ENCODE measurements at regions of chr20 and their contacts with region 1.

Region 1: GRCh38 chr20:62302341-62303058 is at the start of gene ADRM1:
- DNase-seq: peak; percentile 99 to 100
- H3K4me3 ChIP-seq: peak within 1 kb of the TSS; percentile 98
- H3K4me3 Mint-ChIP-seq: peak within 1 kb of the TSS; percentile 89
- H3K27ac Mint-ChIP-seq: peak within 1 kb of the TSS; percentile 97
- H3K4me1 ChIP-seq: peaks cover 20% of the 10 kb centered on the region
- H3K4me1 Mint-ChIP-seq: peaks cover 30% of the 10 kb centered on the region
- H3K27me3 ChIP-seq: no peaks in the 10 kb centered on the region
- H3K27me3 Mint-ChIP-seq: no peaks in the 10 kb centered on the region
- CTCF ChIP-seq: peak; percentile 100
- total RNA-seq, gene ADRM1: 261 and 263 TPM in 2 replicates

Region 2: GRCh38 chr20:62237801-62238571 is 64.5 kb before region 1 on chr20 and contains the start of gene OSBPL2:
- CTCF ChIA-PET with region 1: interaction called, 7 read pairs
- POLR2A ChIA-PET with region 1: no interaction called
- intact Hi-C with region 1: loop called (anchors 1 kb)
- DNase-seq: peak; percentile 100
- H3K4me3 ChIP-seq: peak within 1 kb of the TSS; percentile 89
- H3K4me3 Mint-ChIP-seq: peak within 1 kb of the TSS; percentile 67
- H3K27ac Mint-ChIP-seq: peak within 1 kb of the TSS; percentile 85
- H3K4me1 ChIP-seq: peaks cover 11% of the 10 kb centered on the region
- H3K4me1 Mint-ChIP-seq: peaks cover 7% of the 10 kb centered on the region
- H3K27me3 ChIP-seq: no peaks in the 10 kb centered on the region
- H3K27me3 Mint-ChIP-seq: no peaks in the 10 kb centered on the region
- CTCF ChIP-seq: no peak
- total RNA-seq, gene OSBPL2: 130 and 132 TPM in 2 replicates

Region 3: DNA sequence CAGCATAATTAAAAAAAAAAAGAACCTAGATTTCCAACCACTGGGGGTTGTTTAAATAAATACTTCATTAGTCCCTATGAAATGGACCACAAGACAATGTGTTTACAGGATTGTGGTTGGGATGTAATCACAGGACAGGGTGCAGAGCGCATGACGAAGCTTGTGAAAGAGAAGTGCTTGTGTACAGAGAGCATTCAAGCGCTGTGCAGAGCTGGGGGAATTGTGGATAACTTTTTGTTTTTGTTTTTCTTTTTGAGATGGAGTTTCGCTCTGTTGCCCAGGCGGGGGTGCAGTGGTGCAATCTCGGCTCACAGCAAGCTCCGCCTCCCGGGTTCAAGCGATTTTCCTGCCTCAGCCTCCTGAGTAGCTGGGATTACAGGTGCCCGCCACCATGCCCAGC is 42.3 kb after region 1 on chr20:
- CTCF ChIA-PET with region 1: interaction called, 11 read pairs
- POLR2A ChIA-PET with region 1: no interaction called
- intact Hi-C with region 1: no loop called
- DNase-seq: no peak
- H3K4me3 ChIP-seq: no peak overlapping the region
- H3K4me3 Mint-ChIP-seq: no peak overlapping the region
- H3K27ac Mint-ChIP-seq: peak overlapping the region; percentile 64
- H3K4me1 ChIP-seq: peaks cover under 1% of the 10 kb centered on the region
- H3K4me1 Mint-ChIP-seq: peaks cover under 1% of the 10 kb centered on the region
- H3K27me3 ChIP-seq: no peaks in the 10 kb centered on the region
- H3K27me3 Mint-ChIP-seq: no peaks in the 10 kb centered on the region
- CTCF ChIP-seq: no peak

Region 4: DNA sequence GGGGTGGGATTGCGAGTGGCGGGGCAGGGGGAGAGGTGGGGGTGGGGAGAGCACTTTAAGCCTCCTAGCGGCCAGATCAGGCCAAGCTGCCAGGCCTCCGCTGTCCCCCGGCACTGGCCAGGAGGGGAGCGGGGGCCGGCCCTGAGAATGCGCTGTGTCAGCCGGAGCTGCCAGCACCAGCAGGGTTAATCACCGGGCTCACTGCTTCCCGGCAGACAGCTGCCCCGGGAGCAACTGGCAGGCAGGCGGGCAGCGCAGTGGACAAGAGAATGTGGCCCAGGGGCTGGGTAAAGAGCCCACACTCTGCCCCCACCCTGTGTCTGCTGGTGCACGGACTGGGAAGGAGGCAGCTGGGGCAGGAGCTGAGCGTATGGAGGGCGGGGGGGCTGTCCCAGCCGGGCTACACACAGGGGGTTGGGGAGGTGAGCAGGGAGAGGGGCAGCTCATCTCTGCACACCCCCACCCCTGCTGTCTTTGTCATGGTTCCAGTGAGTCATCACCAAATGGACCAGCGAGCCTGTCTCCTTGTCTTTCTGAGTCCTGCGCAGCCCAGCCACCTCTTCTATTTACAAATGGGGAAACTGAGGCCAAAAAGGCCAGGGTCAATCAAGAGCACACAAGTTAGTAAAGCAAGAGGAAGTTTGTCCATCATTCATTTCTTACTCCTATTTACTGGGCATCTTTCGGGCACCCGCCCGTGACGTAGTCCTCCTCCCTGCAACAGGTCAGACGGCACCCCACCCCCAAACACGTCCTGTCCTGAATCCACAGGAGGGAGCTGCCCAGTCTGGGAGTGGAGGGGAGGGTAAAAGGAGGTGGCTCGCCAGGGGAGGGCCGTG is 66.7 kb after region 1 on chr20:
- CTCF ChIA-PET with region 1: interaction called, 21 read pairs
- POLR2A ChIA-PET with region 1: interaction called, 6 read pairs
- intact Hi-C with region 1: loop called (anchors 1 kb)
- DNase-seq: peak in 1 of 2 experiments; percentile 72
- H3K4me3 ChIP-seq: peak overlapping the region; percentile 94
- H3K4me3 Mint-ChIP-seq: peak overlapping the region; percentile 70
- H3K27ac Mint-ChIP-seq: peak overlapping the region; percentile 90
- H3K4me1 ChIP-seq: peaks cover 55% of the 10 kb centered on the region
- H3K4me1 Mint-ChIP-seq: peaks cover 39% of the 10 kb centered on the region
- H3K27me3 ChIP-seq: no peaks in the 10 kb centered on the region
- H3K27me3 Mint-ChIP-seq: no peaks in the 10 kb centered on the region
- CTCF ChIP-seq: peak; percentile 54 to 77

Region 5: DNA sequence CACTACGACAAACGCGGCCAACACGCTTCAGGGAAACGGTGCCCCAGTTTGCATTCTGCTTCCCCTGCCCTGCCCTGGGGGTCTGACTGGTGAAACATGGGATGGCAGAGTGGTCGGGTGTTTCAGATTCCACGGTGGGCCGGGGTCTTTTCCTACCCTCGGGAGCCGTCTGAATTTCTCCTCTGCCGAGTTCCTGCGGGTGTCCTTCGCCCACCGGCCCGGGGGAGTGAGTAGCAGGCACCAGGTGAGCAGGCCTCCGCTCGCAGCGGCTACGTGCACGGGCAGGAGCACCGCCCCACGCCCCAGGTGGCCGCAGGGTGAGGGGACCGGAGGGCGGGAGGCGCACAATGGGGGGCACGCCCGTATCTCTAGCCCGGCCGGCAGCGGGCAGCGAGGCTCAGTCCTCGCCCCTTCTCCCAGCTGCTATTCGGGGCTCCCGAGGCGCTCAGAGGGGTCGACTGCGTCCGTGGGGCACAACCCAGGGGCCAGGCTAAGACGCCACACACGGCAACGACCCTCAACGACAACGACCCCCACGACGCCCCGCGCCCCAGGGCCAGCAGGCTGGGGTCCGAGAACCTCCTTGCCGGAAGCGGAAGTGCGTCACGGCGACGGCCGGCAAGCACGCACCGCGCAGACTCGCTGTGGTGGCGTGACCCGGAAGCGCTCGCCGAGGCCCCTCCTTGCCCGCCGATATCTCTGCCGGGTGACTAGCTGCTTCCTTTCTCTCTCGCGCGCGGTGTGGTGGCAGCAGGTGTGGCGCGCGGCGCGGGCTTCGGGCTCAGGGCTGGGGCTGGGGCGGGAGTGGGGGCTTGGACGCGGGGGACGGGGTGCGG is 84.1 kb after region 1 on chr20 and contains the start of gene RPS21:
- CTCF ChIA-PET with region 1: interaction called, 82 read pairs
- POLR2A ChIA-PET with region 1: interaction called, 13 read pairs
- intact Hi-C with region 1: loop called (anchors 1 kb)
- DNase-seq: peak; percentile 98
- H3K4me3 ChIP-seq: peak within 1 kb of the TSS; percentile 68
- H3K4me3 Mint-ChIP-seq: peak within 1 kb of the TSS; percentile 99
- H3K27ac Mint-ChIP-seq: peak within 1 kb of the TSS; percentile 95
- H3K4me1 ChIP-seq: peaks cover 19% of the 10 kb centered on the region
- H3K4me1 Mint-ChIP-seq: peaks cover 40% of the 10 kb centered on the region
- H3K27me3 ChIP-seq: no peaks in the 10 kb centered on the region
- H3K27me3 Mint-ChIP-seq: no peaks in the 10 kb centered on the region
- CTCF ChIP-seq: no peak
- total RNA-seq, gene RPS21: 4,496 and 4,723 TPM in 2 replicates

Region 6: GRCh38 chr20:62616728-62617621 is 314.5 kb after region 1 on chr20:
- CTCF ChIA-PET with region 1: interaction called, 3 read pairs
- POLR2A ChIA-PET with region 1: no interaction called
- intact Hi-C with region 1: loop called (anchors 5 kb)
- DNase-seq: peak; percentile 92 to 96
- H3K4me3 ChIP-seq: no peak overlapping the region
- H3K4me3 Mint-ChIP-seq: no peak overlapping the region
- H3K27ac Mint-ChIP-seq: peak overlapping the region; percentile 32
- H3K4me1 ChIP-seq: peaks cover 16% of the 10 kb centered on the region
- H3K4me1 Mint-ChIP-seq: peaks cover 8% of the 10 kb centered on the region
- H3K27me3 ChIP-seq: no peaks in the 10 kb centered on the region
- H3K27me3 Mint-ChIP-seq: no peaks in the 10 kb centered on the region
- CTCF ChIP-seq: peak; percentile 100

Region 7: GRCh38 chr20:62704301-62704948 is 401.9 kb after region 1 on chr20:
- CTCF ChIA-PET with region 1: no interaction called
- POLR2A ChIA-PET with region 1: no interaction called
- intact Hi-C with region 1: no loop called
- DNase-seq: peak in 1 of 2 experiments; percentile 42
- H3K4me3 ChIP-seq: no peak overlapping the region
- H3K4me3 Mint-ChIP-seq: no peak overlapping the region
- H3K27ac Mint-ChIP-seq: no peak overlapping the region
- H3K4me1 ChIP-seq: 0 out of 2 replicates have a peak, but pooled peaks cover 7% of the 10 kb centered on the region
- H3K4me1 Mint-ChIP-seq: no peaks in the 10 kb centered on the region
- H3K27me3 ChIP-seq: peaks cover 8% of the 10 kb centered on the region
- H3K27me3 Mint-ChIP-seq: peaks cover 30% of the 10 kb centered on the region
- CTCF ChIP-seq: no peak